ENCODE measurements at regions of chr7 and their contacts with region 1.

Region 1: DNA sequence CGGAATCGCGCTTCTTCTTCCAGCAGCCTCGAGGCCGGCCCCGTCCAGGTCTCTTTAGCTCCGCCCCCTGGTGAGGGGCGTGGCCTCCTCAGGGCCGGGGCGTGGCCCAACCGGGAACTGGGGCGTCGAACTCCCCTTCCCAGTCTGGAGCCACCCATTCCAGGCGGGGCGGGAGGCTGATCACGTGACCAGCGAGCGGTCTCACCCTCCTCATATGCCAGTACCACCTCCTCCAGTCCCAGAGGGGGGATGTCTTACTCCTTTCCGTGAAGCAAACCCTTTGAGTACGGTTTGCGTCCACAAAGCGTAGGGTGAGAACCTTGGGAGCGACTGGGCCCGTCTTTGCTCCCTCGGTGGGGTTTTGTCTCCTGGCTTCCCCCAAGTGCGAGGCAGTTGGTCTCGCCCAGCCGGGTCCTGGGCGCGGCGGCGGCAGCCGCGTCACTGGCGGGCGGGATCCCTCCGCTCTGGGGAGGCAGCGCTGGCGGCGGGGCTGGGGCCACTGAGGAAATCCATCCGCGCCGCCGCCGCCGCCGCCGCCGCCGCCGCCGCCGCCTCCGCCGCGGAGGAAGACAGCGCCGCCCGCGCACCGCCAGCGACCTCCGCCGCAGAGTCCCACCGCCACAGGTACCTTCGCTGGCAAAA is at the start of gene GNB2:
- DNase-seq: peak; percentile 96
- ATAC-seq: peak; percentile 65
- H3K4me3 ChIP-seq: peak within 1 kb of the TSS; percentile 92 to 97 (median 96)
- H3K27ac ChIP-seq: peak within 1 kb of the TSS; percentile 96
- H3K4me1 ChIP-seq: peaks cover 20% of the 10 kb centered on the region
- H3K27me3 ChIP-seq: peaks cover 0 to 4% of the 10 kb centered on the region in 2 experiments; a peak in 2 of 5 replicates
- CTCF ChIP-seq: no peak
- EP300 ChIP-seq: no peak
- POLR2A ChIP-seq: peak in 1 of 2 experiments; percentile 58; a peak in 1 of 4 replicates
- RAD21 ChIP-seq: peak; percentile 73
- total RNA-seq, gene GNB2: 48.3 and 64.3 TPM in 2 replicates

Region 2: DNA sequence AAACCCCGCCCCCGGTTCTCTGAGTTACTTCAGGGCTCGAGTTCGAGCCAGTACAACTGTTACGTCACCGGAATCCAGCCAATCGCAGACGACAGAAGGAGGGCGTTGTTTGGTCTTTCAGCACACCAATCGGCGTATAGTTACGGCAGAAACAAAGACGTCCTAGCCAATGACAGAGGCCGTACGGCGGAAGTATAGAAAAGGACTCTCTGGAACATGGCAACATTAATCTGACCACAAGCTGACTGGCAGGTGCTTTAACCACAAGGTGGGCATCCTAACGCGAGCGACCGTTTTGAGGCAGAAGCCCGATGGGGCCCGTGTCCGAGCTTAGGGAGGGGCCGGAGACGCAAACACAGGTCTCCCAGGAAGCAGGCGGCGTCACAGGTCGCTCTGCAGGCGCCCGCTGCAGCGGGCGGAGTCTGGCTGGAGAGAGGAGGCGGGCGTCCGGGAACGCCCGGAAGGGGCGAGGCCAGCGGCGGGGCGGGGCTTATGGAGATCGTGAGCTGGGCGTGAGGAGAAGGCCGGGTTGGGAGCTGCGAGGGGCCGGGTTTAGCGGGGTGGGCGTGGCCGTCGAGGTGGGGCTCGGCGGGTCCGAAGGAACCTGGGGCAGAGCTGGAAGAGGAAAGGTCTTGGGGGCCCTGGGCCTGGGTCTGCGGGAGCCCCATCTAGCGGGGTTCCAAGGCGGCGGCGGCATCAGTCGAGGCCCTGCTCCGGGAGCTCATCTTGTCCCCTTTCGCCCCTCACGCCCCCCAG is 61.3 kb before region 1 on chr7 and contains the start of gene MOSPD3:
- CTCF ChIA-PET with region 1: no interaction called
- POLR2A ChIA-PET with region 1: interaction called, 18 read pairs
- in situ Hi-C with region 1: no loop called
- intact Hi-C with region 1: no loop called
- DNase-seq: peak; percentile 99
- ATAC-seq: peak; percentile 94
- H3K4me3 ChIP-seq: peak within 1 kb of the TSS; percentile 61 to 81 (median 77)
- H3K27ac ChIP-seq: peak within 1 kb of the TSS; percentile 95
- H3K4me1 ChIP-seq: peaks cover 29% of the 10 kb centered on the region
- H3K27me3 ChIP-seq: no peaks in the 10 kb centered on the region
- CTCF ChIP-seq: no peak
- EP300 ChIP-seq: no peak
- POLR2A ChIP-seq: peak; percentile 60 to 78
- RAD21 ChIP-seq: no peak
- total RNA-seq, gene MOSPD3: 6.1 and 7.6 TPM in 2 replicates

Region 3: DNA sequence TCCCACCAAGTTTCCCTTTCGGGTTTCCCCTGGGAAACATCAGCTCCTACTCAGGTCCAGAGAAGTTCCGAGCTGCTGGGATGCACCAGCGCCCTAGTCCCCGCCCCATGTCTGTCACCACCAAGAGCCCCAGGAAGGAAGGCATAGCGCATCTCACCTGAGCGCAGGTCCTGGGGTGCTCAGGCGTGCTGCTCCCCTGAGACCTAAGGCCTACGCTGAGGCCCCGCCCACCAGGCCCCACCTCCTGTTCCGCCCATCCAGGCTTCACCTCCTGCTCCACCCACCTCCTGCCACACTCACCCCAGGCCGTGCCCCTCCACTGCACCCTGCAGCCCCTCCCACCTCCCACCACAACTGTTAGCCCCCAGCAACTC is 30.9 kb before region 1 on chr7:
- CTCF ChIA-PET with region 1: no interaction called
- POLR2A ChIA-PET with region 1: interaction called, 14 read pairs
- in situ Hi-C with region 1: no loop called
- intact Hi-C with region 1: loop called (anchors 1 kb)
- DNase-seq: peak; percentile 38
- ATAC-seq: peak; percentile 83
- H3K4me3 ChIP-seq: peak overlapping the region; percentile 57 to 84 (median 64)
- H3K27ac ChIP-seq: peak overlapping the region; percentile 88
- H3K4me1 ChIP-seq: peaks cover 41% of the 10 kb centered on the region
- H3K27me3 ChIP-seq: peaks cover 5 to 17% of the 10 kb centered on the region in 2 experiments; a peak in 4 of 5 replicates
- CTCF ChIP-seq: no peak
- EP300 ChIP-seq: no peak
- POLR2A ChIP-seq: peak; percentile 23 to 93; a peak in 2 of 4 replicates
- RAD21 ChIP-seq: no peak

Region 4: DNA sequence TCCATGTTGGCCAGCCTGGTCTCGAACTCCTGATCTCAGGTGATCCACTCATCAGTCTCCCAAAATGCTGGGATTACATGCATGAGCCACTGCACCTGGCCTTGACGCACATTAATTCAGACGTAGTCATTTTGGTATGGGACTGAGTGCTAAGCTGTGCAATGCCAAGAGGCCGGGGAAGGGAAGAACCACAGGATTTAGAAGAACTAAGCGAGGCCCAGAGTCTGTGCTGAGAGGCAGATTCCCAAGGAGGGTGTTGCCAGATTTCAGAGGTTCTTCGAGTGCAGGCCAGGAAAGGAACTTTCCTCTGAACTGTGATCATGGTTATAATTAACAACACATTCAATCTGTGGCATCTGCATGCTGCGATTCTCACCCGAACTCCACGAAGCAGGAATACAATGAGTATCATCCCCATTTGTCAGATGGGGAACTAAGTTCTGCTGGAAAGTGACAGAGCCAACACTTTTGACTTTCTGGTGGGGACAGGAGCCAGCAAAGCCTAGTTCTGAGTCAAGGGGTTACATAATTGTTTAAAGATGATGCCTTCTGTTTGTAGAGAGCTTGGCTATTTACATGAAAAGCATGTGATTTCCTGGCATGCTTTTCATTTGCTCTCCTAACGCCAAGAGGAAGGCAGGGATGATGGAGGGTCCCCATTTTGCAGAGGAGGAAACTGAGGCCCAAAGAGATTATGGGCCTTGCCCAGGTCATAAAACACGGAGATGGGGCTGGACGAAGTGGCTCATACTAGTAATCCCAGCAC is 53.8 kb after region 1 on chr7:
- CTCF ChIA-PET with region 1: no interaction called
- POLR2A ChIA-PET with region 1: interaction called, 3 read pairs
- in situ Hi-C with region 1: no loop called
- intact Hi-C with region 1: loop called (anchors 1 kb)
- DNase-seq: peak; percentile 32
- ATAC-seq: no peak; the same call in 2 of the 3 replicates
- H3K4me3 ChIP-seq: no peak overlapping the region
- H3K27ac ChIP-seq: no peak overlapping the region
- H3K4me1 ChIP-seq: peaks cover 88% of the 10 kb centered on the region
- H3K27me3 ChIP-seq: no peaks in the 10 kb centered on the region; a peak in 1 of 5 replicates
- CTCF ChIP-seq: no peak
- EP300 ChIP-seq: peak in 1 of 2 experiments; percentile 27; a peak in 1 of 4 replicates
- POLR2A ChIP-seq: no peak
- RAD21 ChIP-seq: no peak

Region 5: GRCh38 chr7:100901921-100902332 is 228.5 kb after region 1 on chr7:
- CTCF ChIA-PET with region 1: no interaction called
- POLR2A ChIA-PET with region 1: no interaction called
- in situ Hi-C with region 1: no loop called
- intact Hi-C with region 1: no loop called
- DNase-seq: no peak
- ATAC-seq: peak; percentile 53; the same call in 2 of the 3 replicates
- H3K4me3 ChIP-seq: no peak overlapping the region
- H3K27ac ChIP-seq: no peak overlapping the region
- H3K4me1 ChIP-seq: peaks cover 8% of the 10 kb centered on the region
- H3K27me3 ChIP-seq: peaks cover 0 to 3% of the 10 kb centered on the region in 2 experiments; a peak in 1 of 5 replicates
- CTCF ChIP-seq: no peak
- EP300 ChIP-seq: no peak
- POLR2A ChIP-seq: no peak
- RAD21 ChIP-seq: no peak

Measured in HepG2 (cell line).